ENCODE measurements at regions of chr11 and their contacts with region 1.

Region 1: GRCh38 chr11:58805065-58805464 is 39.4 kb downstream of the GLYATL2 start:
- DNase-seq: peak; percentile 79
- H3K4me3 ChIP-seq: no peak overlapping the region
- H3K27ac ChIP-seq: no peak overlapping the region
- H3K4me1 ChIP-seq: peaks cover 16% of the 10 kb centered on the region
- H3K27me3 ChIP-seq: no peaks in the 10 kb centered on the region
- CTCF ChIP-seq: no peak

Region 2: GRCh38 chr11:58770627-58771457 is 34.2 kb before region 1 on chr11:
- CTCF ChIA-PET with region 1: no interaction called
- dilution Hi-C with region 1: no loop called
- in situ Hi-C with region 1: no loop called
- intact Hi-C with region 1: no loop called
- DNase-seq: peak; percentile 98
- H3K4me3 ChIP-seq: no peak overlapping the region
- H3K27ac ChIP-seq: peak overlapping the region; percentile 48
- H3K4me1 ChIP-seq: peaks cover 20% of the 10 kb centered on the region
- H3K27me3 ChIP-seq: no peaks in the 10 kb centered on the region
- CTCF ChIP-seq: no peak

Region 3: GRCh38 chr11:58829786-58830185 is 24.7 kb after region 1 on chr11:
- CTCF ChIA-PET with region 1: no interaction called
- dilution Hi-C with region 1: no loop called
- in situ Hi-C with region 1: no loop called
- intact Hi-C with region 1: loop called (anchors 2 kb)
- DNase-seq: peak; percentile 86
- H3K4me3 ChIP-seq: no peak overlapping the region
- H3K27ac ChIP-seq: peak overlapping the region; percentile 28
- H3K4me1 ChIP-seq: peaks cover 24% of the 10 kb centered on the region
- H3K27me3 ChIP-seq: no peaks in the 10 kb centered on the region
- CTCF ChIP-seq: peak; percentile 9 to 42

Region 4: GRCh38 chr11:58866788-58867187 is 61.7 kb after region 1 on chr11:
- CTCF ChIA-PET with region 1: no interaction called
- dilution Hi-C with region 1: no loop called
- in situ Hi-C with region 1: no loop called
- intact Hi-C with region 1: no loop called
- DNase-seq: peak; percentile 35
- H3K4me3 ChIP-seq: no peak overlapping the region
- H3K27ac ChIP-seq: no peak overlapping the region
- H3K4me1 ChIP-seq: peaks cover 9% of the 10 kb centered on the region
- H3K27me3 ChIP-seq: no peaks in the 10 kb centered on the region
- CTCF ChIP-seq: no peak